Posterior vena cava (tissue), 2 donors: ENCODE measurements at regions of chr2 and their contacts with region 1.

Region 1: DNA sequence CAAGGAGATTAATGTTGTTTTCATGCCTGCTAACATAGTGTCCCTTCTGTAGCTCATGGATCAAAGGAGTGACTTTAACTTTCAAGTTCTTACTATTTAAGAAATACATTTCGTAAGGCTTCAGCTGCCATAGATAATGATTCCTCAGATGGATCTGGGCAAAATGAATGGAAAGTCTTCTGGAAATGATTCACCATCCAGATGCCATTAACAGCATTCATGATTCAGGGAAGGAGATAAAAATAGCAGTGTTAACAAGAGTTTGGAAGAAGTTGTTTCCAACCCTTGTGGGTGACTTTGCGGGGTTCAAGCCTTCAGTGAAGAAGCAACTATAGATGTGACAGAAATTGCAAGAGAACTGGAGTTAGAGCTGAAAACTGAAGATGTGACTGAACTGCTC is 17.0 kb downstream of the VRK2 start:
- DNase-seq: no peak

Region 2: DNA sequence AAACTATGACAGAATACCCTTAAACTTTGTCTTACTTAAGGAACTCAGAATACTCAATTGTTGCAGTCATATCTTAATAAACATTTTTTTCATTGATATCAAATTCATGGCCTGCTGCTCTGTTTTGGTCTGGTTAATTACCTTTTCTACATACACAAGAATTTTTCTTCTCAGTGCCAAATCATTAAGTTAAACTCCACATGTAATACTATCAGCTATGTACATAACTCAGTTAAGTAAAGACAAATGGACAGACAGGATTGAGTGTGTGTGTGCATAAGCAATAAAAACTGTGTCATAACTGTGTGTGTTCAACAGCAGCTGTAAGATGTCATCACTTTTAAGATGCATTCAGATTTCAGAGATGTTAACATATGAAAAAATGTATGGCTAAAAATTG is 17.4 kb after region 1 on chr2:
- intact Hi-C with region 1: loop called in 1 of 2 experiments (anchors 1 kb)
- DNase-seq: no peak